AG04449 (cell line): ENCODE measurements at regions of chr1 and their contacts with region 1.

Region 1: DNA sequence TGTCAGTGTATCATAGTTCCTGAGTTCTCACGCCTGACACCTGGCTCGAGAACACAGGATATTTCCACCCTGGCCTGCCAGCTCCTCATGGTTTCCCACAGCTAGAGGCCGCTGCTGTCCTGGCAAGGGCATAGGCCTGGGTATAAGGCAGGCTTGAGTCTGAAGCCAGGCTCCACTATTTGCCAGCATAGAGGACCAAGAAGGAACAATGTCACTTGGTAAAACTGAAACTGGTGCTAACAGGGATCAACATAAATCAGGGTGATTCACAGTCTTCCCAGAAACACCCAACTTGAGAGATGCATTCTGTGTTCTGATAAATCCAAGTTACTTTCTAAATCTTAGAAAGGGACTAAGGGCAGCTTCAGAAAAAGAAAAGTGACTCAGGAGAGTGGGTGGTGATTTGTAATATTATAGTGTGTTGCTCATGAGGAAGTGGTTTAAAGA is 6.9 kb upstream of the S100A2 start:
- DNase-seq: no peak
- H3K4me3 ChIP-seq: no peak overlapping the region
- CTCF ChIP-seq: peak; percentile 91

Region 2: DNA sequence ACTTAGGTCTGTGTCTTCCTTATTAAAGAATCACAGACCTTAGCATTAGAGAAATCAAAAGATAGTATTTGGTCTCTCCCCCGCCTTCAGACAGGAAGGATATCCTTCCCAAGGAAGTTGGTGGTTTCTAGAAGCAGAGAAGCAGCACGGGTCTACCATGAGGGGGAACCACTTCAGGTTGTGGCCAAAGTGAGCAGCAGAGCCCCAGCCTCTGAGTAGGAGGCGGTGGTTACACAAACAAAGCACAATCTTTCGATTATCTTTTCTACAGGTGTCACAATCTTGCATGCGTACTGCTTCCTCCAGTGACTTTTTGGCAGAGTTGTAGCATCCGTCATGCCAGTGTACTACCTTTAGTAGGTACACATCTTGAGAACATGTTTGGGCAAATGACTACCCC is 232.8 kb before region 1 on chr1:
- CTCF ChIA-PET with region 1: no interaction called
- POLR2A ChIA-PET with region 1: no interaction called
- DNase-seq: no peak
- H3K4me3 ChIP-seq: no peak overlapping the region
- CTCF ChIP-seq: no peak

Region 3: DNA sequence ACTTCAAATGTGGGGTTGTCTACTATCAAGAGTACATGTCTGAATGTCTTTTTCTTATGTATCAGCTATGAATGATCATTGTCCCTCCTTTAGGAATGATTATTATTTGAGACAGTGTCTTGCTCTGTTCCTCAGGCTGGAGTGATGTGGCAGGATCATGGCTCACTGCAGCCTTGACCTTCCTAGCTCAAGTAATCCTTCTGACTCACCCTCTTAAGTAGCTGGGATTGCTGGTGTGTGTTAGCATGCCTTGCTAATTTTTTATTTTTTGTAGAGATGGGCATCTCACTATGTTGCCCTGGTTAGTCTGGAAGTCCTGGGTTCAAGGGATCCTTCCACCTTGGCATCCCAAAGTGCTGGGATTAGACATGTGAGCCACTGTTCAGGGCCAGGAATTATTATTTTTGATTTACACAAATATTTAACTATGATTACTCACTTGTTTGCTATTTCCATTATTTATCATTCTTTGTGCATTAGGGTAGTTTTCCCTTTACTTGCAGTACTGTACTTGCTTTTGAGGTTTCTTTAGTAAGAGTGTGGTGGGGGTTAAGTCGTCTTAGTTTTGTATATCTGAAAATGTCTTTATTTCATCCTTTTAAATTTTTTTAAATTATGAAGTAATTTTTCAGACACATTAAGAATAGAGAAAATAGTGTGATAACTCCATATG is 125.0 kb before region 1 on chr1:
- CTCF ChIA-PET with region 1: no interaction called
- POLR2A ChIA-PET with region 1: no interaction called
- DNase-seq: peak; percentile 23
- H3K4me3 ChIP-seq: no peak overlapping the region
- CTCF ChIP-seq: no peak

Region 4: GRCh38 chr1:153494976-153495535 is 77.5 kb before region 1 on chr1:
- CTCF ChIA-PET with region 1: interaction called, 24 read pairs
- POLR2A ChIA-PET with region 1: no interaction called
- DNase-seq: no peak
- H3K4me3 ChIP-seq: no peak overlapping the region
- CTCF ChIP-seq: peak; percentile 86

Region 5: DNA sequence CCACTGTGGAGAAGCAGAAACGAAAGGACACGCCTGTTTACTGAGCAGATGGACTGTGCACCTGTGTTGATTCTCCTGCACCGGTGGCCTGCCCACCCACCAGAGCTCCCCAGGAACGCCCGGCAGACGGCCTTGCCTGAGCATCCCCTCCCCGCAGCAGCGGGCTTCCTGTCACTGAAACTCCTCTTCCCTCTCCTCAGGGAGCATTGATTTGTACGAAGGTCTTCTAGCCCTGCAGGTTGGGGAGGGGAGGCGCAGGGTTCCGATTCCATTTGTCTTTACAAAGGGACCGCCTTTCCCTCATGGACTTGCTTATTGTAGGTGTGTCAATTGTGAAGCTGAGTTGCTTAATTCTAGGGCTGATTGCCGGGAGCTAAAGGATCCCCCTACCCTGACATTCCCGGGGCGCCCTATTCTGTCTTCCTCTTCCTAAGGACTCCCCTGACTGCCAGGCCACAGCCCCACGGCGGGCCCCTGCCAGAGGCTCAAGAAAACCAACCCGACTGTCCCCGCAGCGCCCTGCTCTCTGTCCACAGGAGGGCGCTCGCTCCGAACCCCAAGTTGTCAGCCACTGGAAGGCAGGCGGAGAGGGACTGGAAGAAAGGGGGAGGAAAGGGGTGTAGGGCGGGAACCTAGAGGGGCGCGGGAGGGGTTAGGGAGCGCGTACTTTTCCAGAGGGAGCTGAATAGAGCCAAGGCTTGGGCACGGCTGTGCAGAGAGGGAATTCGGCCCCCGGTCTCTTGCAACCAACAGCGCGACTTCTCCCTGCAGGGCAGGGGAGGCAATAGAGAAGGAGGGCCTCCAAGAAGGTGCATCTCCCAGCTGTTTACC is 39.6 kb before region 1 on chr1:
- CTCF ChIA-PET with region 1: interaction called, 333 read pairs
- POLR2A ChIA-PET with region 1: interaction called, 27 read pairs
- DNase-seq: no peak
- H3K4me3 ChIP-seq: peak overlapping the region; percentile 99
- CTCF ChIP-seq: peak; percentile 99

Region 6: DNA sequence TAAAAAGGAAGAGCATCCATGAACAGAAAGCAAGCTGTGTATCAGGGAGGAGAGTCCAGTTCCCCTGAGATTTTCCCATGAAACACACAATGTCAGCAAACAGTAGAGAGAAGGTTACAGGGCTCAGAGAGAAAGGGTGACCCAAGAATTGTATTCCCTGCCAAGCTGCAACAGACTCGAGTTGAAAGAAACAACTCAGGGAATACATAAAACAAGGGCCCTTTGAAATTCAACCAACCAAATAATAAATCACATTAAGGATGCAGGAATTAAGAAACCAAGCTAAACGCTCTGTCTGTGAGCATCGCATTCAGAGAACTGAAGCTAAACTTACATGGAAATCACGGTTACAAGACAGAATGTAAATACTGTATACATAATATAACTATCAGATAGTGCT is 20.2 kb after region 1 on chr1:
- CTCF ChIA-PET with region 1: interaction called, 21 read pairs
- POLR2A ChIA-PET with region 1: no interaction called
- DNase-seq: no peak
- H3K4me3 ChIP-seq: no peak overlapping the region
- CTCF ChIP-seq: no peak

Region 7: DNA sequence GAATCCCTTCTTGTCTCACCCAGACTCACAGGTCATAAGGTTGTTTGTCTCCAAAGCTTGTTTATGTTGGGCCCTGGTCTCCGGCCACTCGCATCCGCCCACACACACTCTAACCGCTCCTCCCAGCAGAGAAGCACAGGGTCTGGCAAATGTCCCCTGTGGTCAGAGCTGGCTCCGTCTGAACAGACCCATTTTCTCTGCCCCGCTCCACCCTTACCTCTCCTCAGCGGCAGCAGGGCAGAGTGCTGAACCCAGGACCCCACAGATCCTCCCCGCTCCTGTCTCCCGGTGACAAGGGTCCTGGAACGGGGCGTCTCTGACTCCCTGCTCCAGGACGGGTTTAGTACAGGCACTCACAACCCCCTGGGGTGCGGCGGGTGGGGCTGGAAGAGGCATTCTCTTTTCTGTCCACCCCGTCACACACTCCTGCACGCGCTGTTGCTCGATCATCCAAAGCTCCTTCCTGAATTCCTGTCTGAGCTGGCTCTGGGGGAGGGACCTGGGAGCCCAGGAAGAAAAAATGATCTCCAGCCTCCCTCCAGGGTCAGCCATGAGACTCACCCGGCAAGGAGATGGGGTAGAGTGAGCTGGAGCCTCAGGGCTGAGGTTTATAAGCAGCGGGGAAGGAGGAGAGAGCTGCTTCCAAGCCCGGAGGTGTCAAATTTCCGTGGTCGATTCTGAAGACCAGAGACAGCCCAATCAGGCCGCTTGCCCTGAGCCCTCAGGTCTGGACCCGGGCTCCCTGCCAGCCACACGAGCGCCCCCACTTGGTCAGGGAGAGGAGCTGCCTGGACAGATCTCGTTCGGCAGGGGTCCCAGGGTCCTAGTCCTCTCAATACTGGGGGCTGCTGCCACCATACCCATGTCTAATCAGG is 54.6 kb after region 1 on chr1 and contains the start of gene S100A13:
- CTCF ChIA-PET with region 1: interaction called, 148 read pairs
- POLR2A ChIA-PET with region 1: interaction called, 9 read pairs
- DNase-seq: peak; percentile 70
- H3K4me3 ChIP-seq: peak within 1 kb of the TSS; percentile 84
- CTCF ChIP-seq: peak; percentile 84

Region 8: DNA sequence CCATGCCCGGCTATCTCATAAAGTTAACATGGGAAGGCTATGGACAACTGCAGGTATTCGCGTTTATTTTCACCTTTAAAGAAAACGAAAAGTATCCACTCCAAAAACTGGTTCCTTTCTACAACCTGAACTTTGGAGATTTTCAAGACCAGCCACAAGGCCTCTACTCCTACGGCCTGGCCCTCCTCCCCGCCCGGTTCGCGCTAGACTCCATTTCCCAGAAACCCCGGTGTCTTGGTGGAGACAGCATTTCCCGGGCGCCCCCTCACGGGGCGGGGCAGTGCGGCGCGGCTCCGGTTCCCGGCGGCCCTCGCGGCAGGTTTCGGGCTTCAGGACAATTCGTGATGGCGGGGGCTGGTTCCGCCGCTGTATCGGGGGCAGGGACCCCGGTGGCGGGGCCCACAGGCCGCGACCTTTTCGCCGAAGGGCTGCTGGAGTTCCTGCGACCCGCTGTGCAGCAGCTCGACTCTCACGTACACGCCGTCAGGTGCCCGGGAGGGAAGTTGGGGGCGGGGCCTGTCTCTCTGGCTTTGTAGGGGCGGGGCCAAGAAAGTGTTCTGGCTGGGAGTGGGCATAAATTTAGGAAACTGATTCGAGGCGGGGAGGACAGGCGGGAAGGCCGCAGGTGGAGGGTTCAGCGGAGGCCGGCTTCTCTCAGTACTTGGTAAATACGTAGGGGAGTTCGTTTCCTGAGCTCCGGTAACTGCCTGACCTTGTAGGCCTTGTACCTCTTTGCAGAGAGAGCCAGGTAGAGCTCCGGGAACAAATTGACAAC is 86.0 kb after region 1 on chr1 and contains the start of gene SNAPIN:
- CTCF ChIA-PET with region 1: interaction called, 28 read pairs
- POLR2A ChIA-PET with region 1: no interaction called
- DNase-seq: peak; percentile 23
- H3K4me3 ChIP-seq: peak within 1 kb of the TSS; percentile 92
- CTCF ChIP-seq: peak; percentile 45